ENCODE measurements at regions of chr1 and their contacts with region 1.

Region 1: DNA sequence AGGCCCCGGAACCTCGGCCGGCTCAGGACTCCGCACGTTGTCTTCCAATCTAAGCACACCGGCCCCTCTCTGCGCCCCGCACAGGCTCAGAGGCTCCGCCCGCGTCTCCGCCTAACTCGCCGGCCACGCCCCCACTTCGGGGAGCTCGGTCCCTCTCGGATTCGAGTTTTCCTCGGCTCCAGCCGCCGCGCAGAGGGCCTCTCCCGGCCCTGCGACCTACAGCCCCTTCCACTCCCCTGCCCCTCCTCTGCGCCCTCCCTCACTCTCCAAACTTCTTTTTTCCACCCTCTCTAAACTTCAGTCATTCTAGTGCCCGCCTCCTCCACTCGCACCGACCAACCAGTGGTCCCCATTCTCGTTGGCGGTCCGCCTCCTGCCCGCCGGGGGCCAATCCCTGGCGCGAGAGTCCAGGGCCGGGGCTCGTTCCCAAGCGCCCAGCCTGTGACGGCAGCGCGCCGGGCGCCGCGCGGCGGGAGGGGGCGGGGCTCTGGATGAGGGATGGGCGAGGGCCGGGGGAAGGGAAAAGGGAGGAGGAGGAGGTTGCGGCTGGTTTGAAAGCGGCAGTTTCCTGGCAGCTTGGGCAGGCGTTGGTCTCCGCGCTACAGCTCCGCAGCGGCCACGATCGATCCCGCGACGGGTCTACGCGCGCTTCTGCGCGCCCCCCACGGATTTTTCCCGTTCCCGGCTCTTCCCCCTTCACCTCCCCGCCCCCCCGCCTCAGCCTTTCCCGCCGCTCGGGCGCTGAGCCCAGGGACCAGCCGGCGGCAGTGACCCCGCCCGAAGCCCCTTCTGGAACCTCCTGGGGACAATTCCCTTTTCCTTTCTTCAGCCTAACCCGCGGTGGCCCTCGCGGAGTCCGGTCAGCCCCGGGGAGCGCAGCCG is at the start of gene MAGI3:
- DNase-seq: peak; percentile 98
- ATAC-seq: peak; percentile 94
- H3K4me3 ChIP-seq: peak within 1 kb of the TSS; percentile 72
- H3K27ac ChIP-seq: peak within 1 kb of the TSS; percentile 52
- H3K4me1 ChIP-seq: peaks cover 6% of the 10 kb centered on the region
- H3K27me3 ChIP-seq: no peaks in the 10 kb centered on the region
- CTCF ChIP-seq: 0 out of 2 replicates have a peak, but pooled peaks have one; percentile 2
- POLR2A ChIP-seq: peak; percentile 83
- RAD21 ChIP-seq: no peak; the same call in 1 of the 2 replicates
- total RNA-seq, gene MAGI3: 8.8 and 9.2 TPM in 2 replicates

Region 2: GRCh38 chr1:113140588-113141446 is 249.4 kb before region 1 on chr1:
- CTCF ChIA-PET with region 1: interaction called, 4 read pairs
- POLR2A ChIA-PET with region 1: no interaction called
- dilution Hi-C with region 1: no loop called
- in situ Hi-C with region 1: no loop called
- intact Hi-C with region 1: loop called (anchors 5 kb)
- DNase-seq: peak; percentile 65
- ATAC-seq: peak; percentile 84
- H3K4me3 ChIP-seq: no peak overlapping the region
- H3K27ac ChIP-seq: no peak overlapping the region
- H3K4me1 ChIP-seq: peaks cover 5% of the 10 kb centered on the region
- H3K27me3 ChIP-seq: no peaks in the 10 kb centered on the region
- CTCF ChIP-seq: peak; percentile 87
- POLR2A ChIP-seq: no peak
- RAD21 ChIP-seq: peak; percentile 92

Region 3: GRCh38 chr1:113283914-113284313 is 106.3 kb before region 1 on chr1:
- CTCF ChIA-PET with region 1: no interaction called
- POLR2A ChIA-PET with region 1: no interaction called
- dilution Hi-C with region 1: no loop called
- in situ Hi-C with region 1: no loop called
- intact Hi-C with region 1: no loop called
- DNase-seq: no peak
- ATAC-seq: no peak
- H3K4me3 ChIP-seq: no peak overlapping the region
- H3K27ac ChIP-seq: no peak overlapping the region
- H3K4me1 ChIP-seq: no peaks in the 10 kb centered on the region
- H3K27me3 ChIP-seq: no peaks in the 10 kb centered on the region; the same call in 1 of the 2 replicates
- CTCF ChIP-seq: no peak
- POLR2A ChIP-seq: no peak
- RAD21 ChIP-seq: no peak

Region 4: DNA sequence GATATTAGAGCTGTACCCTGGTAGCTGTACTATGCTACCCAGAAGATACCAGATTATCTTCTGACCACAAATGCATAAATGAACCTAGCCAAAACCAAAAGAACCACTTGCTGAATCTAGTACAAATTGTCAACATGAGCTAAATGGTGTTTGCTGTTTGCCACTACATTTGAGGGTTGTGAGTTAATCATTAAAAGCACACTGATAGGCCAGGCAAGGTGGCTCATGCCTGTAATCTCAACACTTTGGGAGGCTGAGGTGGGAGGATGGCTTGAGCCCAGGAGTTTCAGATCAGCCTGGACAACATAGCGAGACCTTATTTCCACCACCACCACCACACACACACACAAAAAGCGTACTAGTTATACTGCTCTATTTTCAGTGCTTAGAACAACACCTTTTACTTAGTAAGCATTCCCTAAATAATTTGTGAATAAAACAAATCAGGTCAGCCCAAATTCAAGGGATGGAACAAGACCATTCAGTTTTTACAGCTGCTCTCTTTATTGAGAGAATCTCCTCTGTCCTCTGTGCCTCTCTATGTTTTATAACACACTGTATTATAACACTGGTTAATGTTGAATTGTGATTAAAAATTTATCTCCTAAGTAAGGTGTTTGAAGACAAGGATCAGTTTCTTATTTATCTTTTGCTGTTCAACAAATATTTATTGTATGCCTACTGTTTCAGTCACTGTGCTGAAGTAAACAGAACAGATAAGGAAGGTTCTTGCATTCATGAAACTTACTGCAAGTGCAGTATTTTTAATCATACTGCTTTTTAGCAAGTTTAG is 44.1 kb after region 1 on chr1:
- CTCF ChIA-PET with region 1: no interaction called
- POLR2A ChIA-PET with region 1: no interaction called
- dilution Hi-C with region 1: no loop called
- in situ Hi-C with region 1: no loop called
- intact Hi-C with region 1: no loop called
- DNase-seq: no peak
- ATAC-seq: no peak
- H3K4me3 ChIP-seq: no peak overlapping the region
- H3K27ac ChIP-seq: no peak overlapping the region
- H3K4me1 ChIP-seq: no peaks in the 10 kb centered on the region
- H3K27me3 ChIP-seq: no peaks in the 10 kb centered on the region
- CTCF ChIP-seq: no peak
- POLR2A ChIP-seq: no peak
- RAD21 ChIP-seq: no peak

Region 5: GRCh38 chr1:113452921-113453770 is 63.0 kb after region 1 on chr1:
- CTCF ChIA-PET with region 1: no interaction called
- POLR2A ChIA-PET with region 1: no interaction called
- dilution Hi-C with region 1: no loop called
- in situ Hi-C with region 1: no loop called
- intact Hi-C with region 1: loop called (anchors 5 kb)
- DNase-seq: peak; percentile 66
- ATAC-seq: peak; percentile 60
- H3K4me3 ChIP-seq: no peak overlapping the region
- H3K27ac ChIP-seq: no peak overlapping the region
- H3K4me1 ChIP-seq: peaks cover 2% of the 10 kb centered on the region
- H3K27me3 ChIP-seq: no peaks in the 10 kb centered on the region
- CTCF ChIP-seq: peak; percentile 55
- POLR2A ChIP-seq: no peak
- RAD21 ChIP-seq: peak; percentile 55

Region 6: GRCh38 chr1:113582084-113582483 is 191.9 kb after region 1 on chr1:
- CTCF ChIA-PET with region 1: no interaction called
- POLR2A ChIA-PET with region 1: no interaction called
- dilution Hi-C with region 1: no loop called
- in situ Hi-C with region 1: no loop called
- intact Hi-C with region 1: no loop called
- DNase-seq: no peak
- ATAC-seq: no peak
- H3K4me3 ChIP-seq: no peak overlapping the region
- H3K27ac ChIP-seq: no peak overlapping the region
- H3K4me1 ChIP-seq: no peaks in the 10 kb centered on the region
- H3K27me3 ChIP-seq: no peaks in the 10 kb centered on the region
- CTCF ChIP-seq: no peak
- POLR2A ChIP-seq: no peak
- RAD21 ChIP-seq: no peak

Region 7: DNA sequence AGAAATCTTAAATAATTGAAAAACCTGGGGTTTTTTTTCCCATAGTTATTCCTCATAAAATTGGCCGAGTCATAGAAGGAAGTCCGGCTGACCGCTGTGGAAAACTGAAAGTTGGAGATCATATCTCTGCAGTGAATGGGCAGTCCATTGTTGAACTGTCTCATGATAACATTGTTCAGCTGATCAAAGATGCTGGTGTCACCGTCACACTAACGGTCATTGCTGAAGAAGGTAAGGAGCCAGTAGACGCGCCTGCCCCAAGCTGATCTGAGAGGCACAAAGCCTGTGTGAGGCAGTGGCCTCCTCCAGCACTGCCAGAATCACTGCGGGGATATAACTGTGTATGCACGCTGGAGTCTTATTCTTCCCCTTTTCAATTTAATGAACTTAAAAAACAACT is 268.8 kb after region 1 on chr1:
- CTCF ChIA-PET with region 1: no interaction called
- POLR2A ChIA-PET with region 1: no interaction called
- dilution Hi-C with region 1: no loop called
- in situ Hi-C with region 1: loop called (anchors 10 kb)
- intact Hi-C with region 1: no loop called
- DNase-seq: no peak
- ATAC-seq: no peak
- H3K4me3 ChIP-seq: no peak overlapping the region
- H3K27ac ChIP-seq: no peak overlapping the region
- H3K4me1 ChIP-seq: no peaks in the 10 kb centered on the region
- H3K27me3 ChIP-seq: no peaks in the 10 kb centered on the region
- CTCF ChIP-seq: no peak
- POLR2A ChIP-seq: no peak
- RAD21 ChIP-seq: no peak

Region 8: GRCh38 chr1:113701429-113701828 is 311.2 kb after region 1 on chr1:
- CTCF ChIA-PET with region 1: no interaction called
- POLR2A ChIA-PET with region 1: no interaction called
- dilution Hi-C with region 1: no loop called
- in situ Hi-C with region 1: no loop called
- intact Hi-C with region 1: no loop called
- DNase-seq: no peak
- ATAC-seq: no peak
- H3K4me3 ChIP-seq: no peak overlapping the region
- H3K27ac ChIP-seq: no peak overlapping the region
- H3K4me1 ChIP-seq: no peaks in the 10 kb centered on the region
- H3K27me3 ChIP-seq: no peaks in the 10 kb centered on the region
- CTCF ChIP-seq: no peak
- POLR2A ChIP-seq: no peak
- RAD21 ChIP-seq: no peak

Region 9: DNA sequence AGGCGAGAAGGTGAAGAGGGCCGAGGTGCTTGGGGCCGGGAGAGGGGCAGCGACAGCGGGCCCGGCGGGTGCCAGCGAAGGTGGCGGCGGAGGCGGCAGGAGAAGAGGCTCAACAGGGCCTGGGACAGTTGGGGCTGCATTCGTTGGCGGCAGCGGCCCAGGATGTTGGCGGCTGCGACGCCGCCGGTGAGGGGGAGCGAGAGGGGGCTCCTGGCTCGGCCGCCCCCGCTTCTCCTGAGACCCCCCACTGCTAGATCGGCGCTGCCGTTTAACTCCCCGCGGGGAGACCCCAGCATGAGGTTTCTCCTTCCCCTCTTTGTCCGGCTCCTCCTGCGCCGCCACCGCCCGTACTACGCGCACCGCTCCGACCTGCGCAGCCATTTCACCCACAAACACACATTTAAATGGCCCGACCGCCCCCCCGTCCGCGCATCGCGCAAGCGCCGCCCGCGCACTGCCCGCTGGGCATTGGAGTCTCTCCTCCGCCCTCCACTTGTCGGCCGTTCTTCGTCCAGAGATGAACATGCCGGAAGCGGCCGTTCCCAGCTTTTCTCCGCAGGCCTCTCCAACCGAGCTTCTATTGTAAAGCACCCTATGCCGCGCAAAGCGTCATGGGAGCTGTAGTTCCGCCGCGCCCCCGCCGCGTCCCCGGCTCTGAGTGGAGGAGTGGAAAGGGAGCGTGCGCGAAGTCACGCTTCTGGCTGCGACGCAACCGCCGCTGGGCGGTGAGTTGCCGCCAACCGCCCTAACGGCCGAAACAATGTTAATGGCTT is 421.9 kb after region 1 on chr1 and contains the start of gene RSBN1:
- CTCF ChIA-PET with region 1: no interaction called
- POLR2A ChIA-PET with region 1: interaction called, 4 read pairs
- dilution Hi-C with region 1: no loop called
- in situ Hi-C with region 1: no loop called
- intact Hi-C with region 1: loop called (anchors 10 kb)
- DNase-seq: peak; percentile 99
- ATAC-seq: peak; percentile 96
- H3K4me3 ChIP-seq: peak within 1 kb of the TSS; percentile 97
- H3K27ac ChIP-seq: peak within 1 kb of the TSS; percentile 60
- H3K4me1 ChIP-seq: peaks cover 4% of the 10 kb centered on the region
- H3K27me3 ChIP-seq: no peaks in the 10 kb centered on the region
- CTCF ChIP-seq: no peak
- POLR2A ChIP-seq: peak; percentile 95
- RAD21 ChIP-seq: no peak; the same call in 1 of the 2 replicates
- total RNA-seq, gene RSBN1: 11.7 and 12.8 TPM in 2 replicates

Measured in IMR-90 (cell line).